Left cardiac atrium (tissue), 4 donors: ENCODE measurements at regions of chr1 and their contacts with region 1.

Region 1: GRCh38 chr1:241998412-241998921 is 431 bp downstream of the MAP1LC3C start:
- DNase-seq: peak; percentile 77
- ATAC-seq: peak; percentile 75 to 93

Region 2: GRCh38 chr1:241611063-241611462 is 387.4 kb before region 1 on chr1:
- intact Hi-C with region 1: loop called in 1 of 2 experiments (anchors 5 kb)
- DNase-seq: no peak
- ATAC-seq: peak; percentile 83

Region 3: GRCh38 chr1:241672301-241672700 is 326.2 kb before region 1 on chr1:
- intact Hi-C with region 1: no loop called
- DNase-seq: no peak
- ATAC-seq: no peak

Region 4: GRCh38 chr1:241895013-241895412 is 103.5 kb before region 1 on chr1:
- intact Hi-C with region 1: loop called in 1 of 2 experiments (anchors 10 kb)
- DNase-seq: no peak
- ATAC-seq: no peak